ENCODE measurements at regions of chr12 and their contacts with region 1.

Region 1: DNA sequence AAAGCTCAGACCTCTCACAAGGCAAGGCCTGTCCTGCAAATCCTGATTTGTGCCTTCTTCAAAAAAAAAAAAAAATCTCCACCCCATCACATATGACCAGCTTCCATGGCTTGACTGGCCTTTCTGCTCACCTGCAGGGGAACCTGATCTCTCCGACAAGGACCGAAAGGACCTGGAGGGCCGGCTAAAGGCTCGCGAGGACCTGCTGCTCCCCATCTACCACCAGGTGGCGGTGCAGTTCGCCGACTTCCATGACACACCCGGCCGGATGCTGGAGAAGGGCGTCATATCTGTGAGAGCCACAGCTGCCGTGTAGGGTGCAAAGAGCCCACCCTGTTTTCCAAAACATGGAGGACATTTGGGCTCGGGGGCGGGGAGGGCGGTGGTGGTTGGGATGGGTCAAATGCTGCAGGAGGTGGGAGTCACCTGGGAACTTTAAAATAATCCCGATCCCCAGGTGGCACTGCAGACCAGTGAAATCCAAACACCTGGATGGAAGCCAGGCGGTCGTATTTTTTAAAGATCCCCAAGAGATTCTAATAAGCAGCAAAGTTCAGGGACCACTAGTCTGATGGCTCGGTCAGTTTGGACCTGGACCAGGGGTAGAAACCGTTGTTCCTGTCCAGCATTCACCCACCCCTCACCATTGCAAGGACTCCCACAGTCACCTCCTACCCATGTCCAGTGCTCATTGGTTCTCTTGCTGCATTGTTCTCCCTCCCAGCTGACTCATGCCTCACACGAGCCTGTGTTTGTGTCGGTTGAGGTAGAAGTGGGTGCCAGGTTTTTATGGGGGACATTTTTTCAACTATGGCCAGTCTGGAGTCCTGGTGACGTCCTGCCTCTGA is 44.8 kb downstream of the FOXN4 start:
- DNase-seq: peak; percentile 22 to 95 (median 74)

Region 2: DNA sequence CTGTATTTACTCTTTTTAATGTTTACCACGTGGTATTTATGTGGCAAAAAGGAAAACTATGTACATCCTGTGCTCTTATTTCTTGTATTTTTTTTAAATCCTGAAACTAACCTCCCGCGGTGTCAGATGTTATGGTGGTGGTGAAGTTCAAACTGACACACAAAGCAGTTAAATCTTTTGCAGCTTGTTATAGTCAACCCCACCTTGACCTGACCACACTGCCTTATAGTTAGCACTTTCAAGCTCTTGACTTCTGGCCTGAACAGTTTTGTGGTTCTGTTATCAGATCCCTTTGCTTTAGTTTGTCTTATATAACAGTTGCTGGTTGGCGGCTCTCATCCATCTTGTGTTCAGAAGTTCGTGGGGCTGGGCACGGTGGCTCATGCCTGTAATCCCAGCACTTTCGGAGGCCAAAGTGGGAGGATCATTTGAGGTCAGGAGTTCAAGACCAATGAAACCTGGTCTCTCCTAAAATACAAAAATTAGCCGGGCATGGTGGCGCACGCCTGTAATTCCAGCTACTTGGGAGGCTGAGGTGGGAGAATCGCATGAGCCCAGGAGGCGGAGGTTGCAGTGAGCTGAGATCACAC is 164.8 kb before region 1 on chr12:
- intact Hi-C with region 1: no loop called
- DNase-seq: no peak

Region 3: GRCh38 chr12:109385339-109386067 is 121.2 kb after region 1 on chr12:
- intact Hi-C with region 1: loop called (anchors 1 kb)
- DNase-seq: no peak

Region 4: GRCh38 chr12:109612975-109613502 is 348.7 kb after region 1 on chr12:
- intact Hi-C with region 1: no loop called
- DNase-seq: no peak

Measured in posterior cingulate gyrus (tissue), 11 donors.